Right cardiac atrium (tissue), 5 donors: ENCODE measurements at regions of chr10 and their contacts with region 1.

Region 1: GRCh38 chr10:94315024-94315451 is 47.7 kb downstream of the NOC3L start:
- DNase-seq: no peak
- ATAC-seq: peak in 1 of 2 donors; percentile 43
- H3K4me3 ChIP-seq: no peak overlapping the region
- H3K27ac ChIP-seq: no peak overlapping the region
- H3K4me1 ChIP-seq: no peaks in the 10 kb centered on the region
- H3K27me3 ChIP-seq: no peaks in the 10 kb centered on the region

Region 2: DNA sequence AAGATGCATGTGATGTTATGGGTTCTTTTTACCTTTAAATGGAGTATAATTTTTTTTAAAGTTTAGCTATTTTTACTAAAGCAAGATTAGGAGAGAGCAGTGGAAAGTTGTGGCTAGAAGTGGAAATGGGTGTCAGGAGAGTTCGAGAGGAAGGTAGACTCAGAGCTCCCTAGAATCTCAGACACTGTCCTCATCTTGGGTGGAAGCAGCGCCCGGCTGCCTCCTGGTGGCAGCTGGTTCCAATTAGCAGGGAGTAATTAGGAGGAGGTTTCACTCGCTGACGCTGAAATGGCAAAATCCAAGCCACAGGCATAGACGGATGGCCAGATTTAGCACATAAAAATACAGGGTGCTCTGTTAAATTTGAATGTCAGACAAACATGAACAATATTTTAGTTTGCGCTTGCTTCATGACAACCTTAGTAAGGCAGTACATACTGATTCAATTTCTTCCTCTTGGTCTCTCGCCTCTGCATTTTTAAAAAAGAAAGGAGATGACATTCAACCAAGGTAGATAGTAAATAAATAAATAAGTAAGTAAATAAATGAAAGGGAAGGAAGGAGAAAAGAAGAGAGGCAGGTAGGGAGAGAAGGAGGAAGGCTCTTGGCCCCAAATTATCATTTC is 498.8 kb before region 1 on chr10:
- intact Hi-C with region 1: loop called in 1 of 4 experiments (anchors 10 kb)
- DNase-seq: peak; percentile 65 to 91 (median 86)
- ATAC-seq: peak; percentile 91 to 93
- H3K4me3 ChIP-seq: no peak overlapping the region
- H3K27ac ChIP-seq: no peak overlapping the region
- H3K4me1 ChIP-seq: no peaks in the 10 kb centered on the region
- H3K27me3 ChIP-seq: no peaks in the 10 kb centered on the region

Region 3: DNA sequence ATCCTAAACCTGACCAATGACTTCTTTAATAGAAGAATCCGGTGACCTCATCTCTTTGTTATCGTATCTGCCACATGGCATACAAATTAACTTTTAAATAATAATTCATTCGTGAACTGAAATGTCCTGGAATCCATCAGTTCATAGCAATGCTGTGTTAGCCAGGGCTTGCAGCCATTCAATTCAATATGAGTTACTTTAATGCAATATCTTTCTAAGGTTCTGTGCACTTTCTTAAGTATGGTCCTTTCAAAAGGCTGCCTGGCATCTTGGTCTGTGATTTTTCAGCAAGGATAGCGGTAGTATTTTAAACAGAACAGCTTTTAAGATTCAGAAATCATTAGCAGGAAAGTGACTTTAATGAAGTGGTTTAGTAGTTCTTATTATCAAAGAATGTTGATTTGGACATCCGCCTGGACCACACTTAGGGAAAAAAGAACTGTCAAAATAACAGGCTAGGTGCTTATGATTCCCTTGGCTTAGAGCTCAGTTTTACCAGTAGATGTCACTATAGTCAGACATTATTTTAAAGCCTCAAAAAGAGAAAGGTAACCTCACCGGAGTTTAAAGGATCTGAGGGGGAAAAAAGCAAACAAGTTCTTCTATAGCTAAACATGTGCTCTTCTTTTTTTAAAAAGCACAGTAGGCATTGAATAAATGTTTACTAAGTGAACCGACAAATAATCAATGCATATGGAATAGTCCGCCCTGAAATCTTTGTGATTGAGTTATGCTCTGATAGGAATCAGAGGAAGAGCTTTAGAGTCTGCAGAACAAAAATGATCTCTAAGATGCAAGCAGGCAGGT is 398.6 kb before region 1 on chr10:
- intact Hi-C with region 1: loop called (anchors 2 to 10 kb)
- DNase-seq: no peak
- ATAC-seq: peak; percentile 76 to 79
- H3K4me3 ChIP-seq: no peak overlapping the region
- H3K27ac ChIP-seq: no peak overlapping the region
- H3K4me1 ChIP-seq: no peaks in the 10 kb centered on the region
- H3K27me3 ChIP-seq: no peaks in the 10 kb centered on the region

Region 4: GRCh38 chr10:94076321-94076841 is 238.7 kb before region 1 on chr10:
- intact Hi-C with region 1: loop called in 1 of 4 experiments (anchors 5 kb)
- DNase-seq: peak in 1 of 3 donors; percentile 57
- ATAC-seq: peak; percentile 79 to 83
- H3K4me3 ChIP-seq: no peak overlapping the region
- H3K27ac ChIP-seq: no peak overlapping the region
- H3K4me1 ChIP-seq: no peaks in the 10 kb centered on the region
- H3K27me3 ChIP-seq: no peaks in the 10 kb centered on the region